ENCODE measurements at regions of chr10 and their contacts with region 1.

Region 1: GRCh38 chr10:65891073-65891981 is 1034.5 kb upstream of the LRRTM3 start:
- DNase-seq: peak; percentile 50
- ATAC-seq: peak; percentile 91
- H3K4me3 ChIP-seq: peak overlapping the region; percentile 49; the same call in 1 of the 2 replicates
- H3K27ac ChIP-seq: peak overlapping the region; percentile 50
- H3K4me1 ChIP-seq: peaks cover 6% of the 10 kb centered on the region
- H3K27me3 ChIP-seq: no peaks in the 10 kb centered on the region
- CTCF ChIP-seq: no peak
- EP300 ChIP-seq: peak in 1 of 2 experiments; percentile 11; a peak in 1 of 4 replicates
- POLR2A ChIP-seq: peak; percentile 50; the same call in 1 of the 2 replicates
- RAD21 ChIP-seq: no peak

Region 2: GRCh38 chr10:65501259-65501658 is 390.1 kb before region 1 on chr10:
- CTCF ChIA-PET with region 1: no interaction called
- POLR2A ChIA-PET with region 1: no interaction called
- RAD21 ChIA-PET with region 1: interaction called, 3 read pairs
- SMC1A ChIA-PET with region 1: no interaction called
- in situ Hi-C with region 1: no loop called
- intact Hi-C with region 1: loop called (anchors 10 kb)
- DNase-seq: peak; percentile 48
- ATAC-seq: peak; percentile 98
- H3K4me3 ChIP-seq: no peak overlapping the region
- H3K27ac ChIP-seq: no peak overlapping the region
- H3K4me1 ChIP-seq: no peaks in the 10 kb centered on the region
- H3K27me3 ChIP-seq: no peaks in the 10 kb centered on the region
- CTCF ChIP-seq: no peak
- EP300 ChIP-seq: peak; percentile 56 to 62; a peak in 2 of 4 replicates
- POLR2A ChIP-seq: no peak
- RAD21 ChIP-seq: no peak

Region 3: DNA sequence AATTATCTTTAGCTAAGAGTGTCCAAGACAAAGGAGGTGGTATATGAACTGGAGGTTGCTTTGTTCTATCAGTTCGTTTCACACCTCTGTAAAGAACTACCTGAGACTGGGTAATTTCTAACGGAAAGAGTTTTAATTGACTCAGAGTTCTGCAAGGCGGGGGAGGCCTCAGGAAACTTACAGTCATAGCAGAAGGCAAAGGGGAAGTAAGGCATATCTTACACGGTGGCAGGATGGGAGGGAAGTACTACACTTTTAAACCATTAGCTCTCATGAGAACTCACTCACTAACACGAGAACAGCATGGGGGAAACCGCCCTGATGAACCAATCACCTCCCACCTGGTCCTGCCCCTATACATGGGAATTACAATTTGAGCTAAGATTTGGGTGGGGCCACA is 167.8 kb before region 1 on chr10:
- CTCF ChIA-PET with region 1: no interaction called
- POLR2A ChIA-PET with region 1: no interaction called
- RAD21 ChIA-PET with region 1: no interaction called
- SMC1A ChIA-PET with region 1: no interaction called
- in situ Hi-C with region 1: no loop called
- intact Hi-C with region 1: loop called (anchors 5 kb)
- DNase-seq: no peak
- ATAC-seq: peak; percentile 84
- H3K4me3 ChIP-seq: no peak overlapping the region
- H3K27ac ChIP-seq: no peak overlapping the region
- H3K4me1 ChIP-seq: no peaks in the 10 kb centered on the region
- H3K27me3 ChIP-seq: no peaks in the 10 kb centered on the region
- CTCF ChIP-seq: no peak
- EP300 ChIP-seq: no peak
- POLR2A ChIP-seq: no peak
- RAD21 ChIP-seq: no peak

Region 4: DNA sequence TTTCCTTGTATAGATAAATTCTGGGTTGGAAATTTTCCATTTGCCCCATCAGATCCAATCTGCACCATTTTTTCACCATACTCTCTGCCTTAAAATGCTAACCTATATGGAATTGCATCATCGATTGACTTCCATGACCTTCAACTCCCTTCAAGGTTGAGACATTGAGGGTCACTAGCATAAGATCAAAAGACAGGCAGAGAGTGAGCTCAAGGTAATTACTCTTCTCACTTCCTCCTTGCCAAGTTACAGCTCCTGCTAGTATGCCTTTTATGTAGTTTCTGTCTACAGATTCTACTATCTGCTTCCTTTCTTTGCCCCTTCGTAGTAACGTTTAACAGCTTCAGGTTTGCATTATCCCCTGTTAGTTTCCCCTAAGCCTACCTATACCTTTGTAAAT is 93.2 kb before region 1 on chr10:
- CTCF ChIA-PET with region 1: no interaction called
- POLR2A ChIA-PET with region 1: interaction called, 3 read pairs
- RAD21 ChIA-PET with region 1: interaction called, 5 read pairs
- SMC1A ChIA-PET with region 1: interaction called, 4 read pairs
- in situ Hi-C with region 1: no loop called
- intact Hi-C with region 1: loop called (anchors 5 kb)
- DNase-seq: peak; percentile 30
- ATAC-seq: peak; percentile 94
- H3K4me3 ChIP-seq: no peak overlapping the region
- H3K27ac ChIP-seq: no peak overlapping the region
- H3K4me1 ChIP-seq: no peaks in the 10 kb centered on the region
- H3K27me3 ChIP-seq: no peaks in the 10 kb centered on the region
- CTCF ChIP-seq: no peak
- EP300 ChIP-seq: peak in 1 of 2 experiments; percentile 44; a peak in 1 of 4 replicates
- POLR2A ChIP-seq: no peak
- RAD21 ChIP-seq: no peak

Region 5: DNA sequence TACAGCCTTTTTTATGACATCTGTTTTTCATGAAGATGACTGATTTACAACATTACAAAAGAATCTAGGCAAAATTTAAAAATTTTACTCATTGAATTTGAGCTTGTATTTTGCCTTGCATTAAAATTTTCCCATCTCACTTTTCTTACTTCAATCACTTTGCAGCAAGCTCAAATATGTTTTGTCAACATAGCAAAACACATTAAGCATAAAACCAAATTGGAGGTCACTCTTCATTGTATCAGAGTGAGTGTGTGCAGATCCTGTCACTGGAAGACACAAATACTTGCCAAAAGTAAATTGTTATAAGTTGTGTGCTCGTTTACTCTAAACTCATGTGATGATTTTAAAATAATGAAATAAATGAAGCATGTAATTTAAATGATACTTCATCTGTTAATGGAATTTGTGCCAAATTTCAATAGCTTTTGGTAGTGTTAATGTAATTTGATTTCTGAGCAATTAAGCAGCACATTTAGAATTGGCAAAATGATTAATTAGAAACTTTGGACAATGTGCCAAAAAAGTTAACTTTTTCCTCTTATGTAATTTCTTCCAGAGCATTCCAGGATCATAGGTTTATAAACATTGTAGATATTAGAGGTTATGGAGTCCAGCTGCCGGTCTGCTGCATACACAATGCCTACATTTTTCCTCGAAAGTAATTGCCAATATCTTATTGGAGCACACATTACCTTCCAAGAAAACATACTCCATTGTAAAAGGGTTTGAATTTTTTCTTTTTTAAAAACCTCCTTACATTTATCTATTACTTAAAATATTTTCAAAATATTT is 43.7 kb before region 1 on chr10:
- CTCF ChIA-PET with region 1: interaction called, 3 read pairs
- POLR2A ChIA-PET with region 1: no interaction called
- RAD21 ChIA-PET with region 1: interaction called, 3 read pairs
- SMC1A ChIA-PET with region 1: interaction called, 3 read pairs
- in situ Hi-C with region 1: no loop called
- intact Hi-C with region 1: loop called (anchors 5 kb)
- DNase-seq: no peak
- ATAC-seq: no peak
- H3K4me3 ChIP-seq: no peak overlapping the region
- H3K27ac ChIP-seq: no peak overlapping the region
- H3K4me1 ChIP-seq: no peaks in the 10 kb centered on the region
- H3K27me3 ChIP-seq: no peaks in the 10 kb centered on the region
- CTCF ChIP-seq: no peak
- EP300 ChIP-seq: no peak
- POLR2A ChIP-seq: no peak
- RAD21 ChIP-seq: no peak

Measured in GM12878 (cell line).